K562 (cell line): ENCODE measurements at regions of chr13 and their contacts with region 1.

Region 1: GRCh38 chr13:59677966-59678814 is 485.5 kb downstream of the DIAPH3 start:
- DNase-seq: peak; percentile 15 to 49 (median 20)
- ATAC-seq: peak; percentile 78
- H3K4me3 ChIP-seq: no peak overlapping the region
- H3K27ac ChIP-seq: no peak overlapping the region
- H3K4me1 ChIP-seq: no peaks in the 10 kb centered on the region
- H3K27me3 ChIP-seq: no peaks in the 10 kb centered on the region
- CTCF ChIP-seq: peak; percentile 37 to 69 (median 54); a peak in 5 of 6 replicates
- EP300 ChIP-seq: no peak
- POLR2A ChIP-seq: no peak
- RAD21 ChIP-seq: peak; percentile 57 to 73

Region 2: DNA sequence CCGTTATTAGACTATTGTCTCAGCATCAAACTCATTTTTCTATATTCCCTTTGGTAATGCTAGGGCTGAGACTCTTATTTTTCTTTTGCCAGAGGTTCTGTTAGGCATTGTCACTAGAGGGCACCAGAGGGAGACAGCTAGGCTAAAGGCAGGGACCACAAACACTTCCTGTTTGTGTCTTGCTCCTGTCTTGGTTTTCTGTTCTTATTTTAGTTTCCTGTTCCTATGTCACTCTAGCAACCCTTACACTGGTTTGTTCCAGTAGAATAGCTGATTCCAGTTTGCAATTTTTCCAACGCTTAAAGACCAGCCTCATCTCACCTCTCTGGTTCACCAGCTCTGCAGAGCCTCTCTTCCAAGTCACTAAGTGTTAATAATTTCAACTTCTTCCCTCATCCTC is 286.5 kb before region 1 on chr13:
- CTCF ChIA-PET with region 1: no interaction called
- POLR2A ChIA-PET with region 1: interaction called, 3 read pairs
- in situ Hi-C with region 1: no loop called
- intact Hi-C with region 1: loop called (anchors 5 kb)
- DNase-seq: peak; percentile 7 to 64 (median 22)
- ATAC-seq: peak; percentile 83
- H3K4me3 ChIP-seq: no peak overlapping the region
- H3K27ac ChIP-seq: no peak overlapping the region
- H3K4me1 ChIP-seq: no peaks in the 10 kb centered on the region
- H3K27me3 ChIP-seq: no peaks in the 10 kb centered on the region
- CTCF ChIP-seq: peak; percentile 60 to 66 (median 61)
- EP300 ChIP-seq: no peak
- POLR2A ChIP-seq: no peak
- RAD21 ChIP-seq: peak; percentile 68 to 72

Region 3: DNA sequence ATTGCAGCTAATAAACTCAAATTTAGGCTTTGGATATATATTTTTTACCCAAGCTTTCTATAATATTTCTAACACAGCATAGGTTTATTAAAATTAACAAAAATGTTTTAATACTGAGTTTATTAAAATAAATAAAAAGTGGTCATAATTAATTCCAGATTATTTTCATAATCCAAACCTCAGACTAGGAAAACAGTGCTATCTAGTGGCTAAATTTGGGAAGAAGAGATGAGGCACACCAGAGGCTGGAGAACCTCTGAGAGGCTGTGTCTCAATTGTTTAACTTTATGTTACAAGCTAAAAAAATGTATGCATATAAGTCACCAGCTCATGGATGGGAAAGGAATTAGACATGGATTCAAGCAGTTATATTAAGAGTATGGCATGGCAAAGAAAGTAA is 93.1 kb after region 1 on chr13:
- CTCF ChIA-PET with region 1: no interaction called
- POLR2A ChIA-PET with region 1: no interaction called
- in situ Hi-C with region 1: no loop called
- intact Hi-C with region 1: loop called (anchors 5 kb)
- DNase-seq: peak in 2 of 4 experiments; percentile 4 to 11
- ATAC-seq: no peak
- H3K4me3 ChIP-seq: no peak overlapping the region
- H3K27ac ChIP-seq: no peak overlapping the region
- H3K4me1 ChIP-seq: no peaks in the 10 kb centered on the region
- H3K27me3 ChIP-seq: no peaks in the 10 kb centered on the region
- CTCF ChIP-seq: peak; percentile 7 to 48 (median 24); a peak in 2 of 6 replicates
- EP300 ChIP-seq: no peak
- POLR2A ChIP-seq: no peak
- RAD21 ChIP-seq: peak; percentile 32 to 40

Region 4: DNA sequence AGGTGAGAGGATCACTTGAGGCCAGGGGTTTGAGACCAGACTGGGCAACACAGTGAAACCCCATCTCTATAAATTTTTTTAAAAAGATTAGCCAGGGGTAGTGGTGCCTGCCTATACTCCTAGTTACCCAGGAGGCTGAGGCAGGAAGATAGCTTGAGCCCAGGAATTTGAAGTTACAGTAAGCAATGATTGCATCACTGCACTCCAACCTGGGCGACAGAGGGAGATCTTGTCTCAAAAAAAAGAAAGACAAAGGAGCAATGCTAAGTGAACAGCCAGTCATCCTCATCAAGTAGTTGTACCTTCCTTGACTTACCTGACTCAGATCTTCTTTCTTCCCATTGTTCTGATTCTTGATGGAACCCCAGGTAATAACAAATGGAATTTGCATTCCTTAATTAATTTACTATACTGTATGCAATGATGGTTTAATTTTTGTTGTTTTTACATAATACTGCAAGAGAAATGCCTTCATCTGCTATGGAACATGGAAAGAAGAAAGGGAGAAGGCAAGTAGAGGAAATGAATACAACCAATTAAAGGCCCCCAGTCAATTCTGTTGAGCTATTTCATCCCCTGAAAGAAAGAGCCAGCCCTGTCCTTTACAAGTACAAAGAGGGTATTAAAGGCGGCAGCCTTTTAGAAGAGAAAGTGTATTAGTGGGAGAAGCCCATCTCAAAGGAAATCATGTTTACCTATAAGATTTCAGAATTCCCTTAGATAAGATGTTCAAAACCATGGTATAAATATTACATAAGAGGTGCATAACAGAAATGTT is 168.8 kb after region 1 on chr13:
- CTCF ChIA-PET with region 1: no interaction called
- POLR2A ChIA-PET with region 1: no interaction called
- in situ Hi-C with region 1: no loop called
- intact Hi-C with region 1: no loop called
- DNase-seq: no peak
- ATAC-seq: no peak
- H3K4me3 ChIP-seq: no peak overlapping the region
- H3K27ac ChIP-seq: no peak overlapping the region
- H3K4me1 ChIP-seq: no peaks in the 10 kb centered on the region
- H3K27me3 ChIP-seq: no peaks in the 10 kb centered on the region
- CTCF ChIP-seq: no peak
- EP300 ChIP-seq: no peak
- POLR2A ChIP-seq: no peak
- RAD21 ChIP-seq: no peak

Region 5: GRCh38 chr13:60226507-60226906 is 548.3 kb after region 1 on chr13:
- CTCF ChIA-PET with region 1: no interaction called
- POLR2A ChIA-PET with region 1: interaction called, 3 read pairs
- in situ Hi-C with region 1: no loop called
- intact Hi-C with region 1: loop called (anchors 1 kb)
- DNase-seq: peak; percentile 8 to 76 (median 32)
- ATAC-seq: peak; percentile 92
- H3K4me3 ChIP-seq: no peak overlapping the region
- H3K27ac ChIP-seq: no peak overlapping the region
- H3K4me1 ChIP-seq: peaks cover 5 to 32% of the 10 kb centered on the region in 2 experiments; a peak in 4 of 5 replicates
- H3K27me3 ChIP-seq: no peaks in the 10 kb centered on the region
- CTCF ChIP-seq: peak; percentile 67 to 75 (median 73)
- EP300 ChIP-seq: no peak
- POLR2A ChIP-seq: no peak
- RAD21 ChIP-seq: peak; percentile 80 to 86

Region 6: DNA sequence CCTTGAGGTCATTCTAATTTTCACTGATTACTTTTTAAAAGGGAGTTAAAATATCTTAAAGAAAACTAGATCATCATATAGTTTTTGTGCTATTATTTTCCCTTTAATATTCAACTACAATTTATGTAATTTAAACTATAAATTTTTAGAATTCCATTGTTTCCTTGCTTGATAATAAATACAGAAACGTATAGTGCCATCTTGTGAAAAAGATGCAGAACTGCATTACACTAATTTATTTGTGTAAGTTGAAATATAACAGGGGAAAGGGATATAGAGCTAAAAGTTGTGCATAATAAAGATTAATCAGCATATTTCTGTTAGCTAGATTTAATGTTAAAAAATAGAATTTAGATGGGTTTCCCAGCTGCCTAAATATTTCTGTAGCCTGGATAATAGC is 657.3 kb after region 1 on chr13:
- CTCF ChIA-PET with region 1: no interaction called
- POLR2A ChIA-PET with region 1: no interaction called
- in situ Hi-C with region 1: loop called (anchors 10 kb)
- intact Hi-C with region 1: no loop called
- DNase-seq: no peak
- ATAC-seq: no peak
- H3K4me3 ChIP-seq: no peak overlapping the region
- H3K27ac ChIP-seq: no peak overlapping the region
- H3K4me1 ChIP-seq: no peaks in the 10 kb centered on the region; a peak in 1 of 5 replicates
- H3K27me3 ChIP-seq: no peaks in the 10 kb centered on the region
- CTCF ChIP-seq: peak in 2 of 3 experiments; percentile 25 to 62; a peak in 3 of 6 replicates
- EP300 ChIP-seq: no peak
- POLR2A ChIP-seq: no peak
- RAD21 ChIP-seq: peak; percentile 66 to 70